Ovary (tissue), 10 donors: ENCODE measurements at regions of chr11 and their contacts with region 1.

Region 1: GRCh38 chr11:62394825-62395538 is 23.9 kb upstream of the SCGB1A1 start:
- DNase-seq: peak; percentile 83 to 91 (median 88)
- H3K4me3 ChIP-seq: peak overlapping the region; percentile 40
- H3K27ac ChIP-seq: peak overlapping the region in 1 of 2 donors; percentile 75
- H3K4me1 ChIP-seq: peaks cover 24% of the 10 kb centered on the region
- H3K27me3 ChIP-seq: no peaks in the 10 kb centered on the region
- CTCF ChIP-seq: peak; percentile 58 to 80 (median 65)
- EP300 ChIP-seq: no peak
- POLR2A ChIP-seq: no peak

Region 2: GRCh38 chr11:61477727-61478148 is 917.2 kb before region 1 on chr11:
- intact Hi-C with region 1: no loop called
- DNase-seq: peak; percentile 43 to 77 (median 63)
- H3K4me3 ChIP-seq: no peak overlapping the region
- H3K27ac ChIP-seq: no peak overlapping the region
- H3K4me1 ChIP-seq: no peaks in the 10 kb centered on the region
- H3K27me3 ChIP-seq: no peaks in the 10 kb centered on the region
- CTCF ChIP-seq: peak; percentile 66 to 88 (median 88)
- EP300 ChIP-seq: no peak
- POLR2A ChIP-seq: no peak

Region 3: GRCh38 chr11:62295504-62295903 is 99.5 kb before region 1 on chr11:
- intact Hi-C with region 1: no loop called
- DNase-seq: no peak
- H3K4me3 ChIP-seq: no peak overlapping the region
- H3K27ac ChIP-seq: no peak overlapping the region
- H3K4me1 ChIP-seq: no peaks in the 10 kb centered on the region
- H3K27me3 ChIP-seq: no peaks in the 10 kb centered on the region
- CTCF ChIP-seq: no peak
- EP300 ChIP-seq: no peak
- POLR2A ChIP-seq: no peak

Region 4: GRCh38 chr11:62542750-62543567 is 148.0 kb after region 1 on chr11:
- intact Hi-C with region 1: loop called in 2 of 4 experiments (anchors 2 to 5 kb)
- DNase-seq: peak; percentile 75 to 86 (median 84)
- H3K4me3 ChIP-seq: peak overlapping the region; percentile 99
- H3K27ac ChIP-seq: peak overlapping the region; percentile 68 to 94
- H3K4me1 ChIP-seq: peaks cover 47% of the 10 kb centered on the region
- H3K27me3 ChIP-seq: no peaks in the 10 kb centered on the region
- CTCF ChIP-seq: peak; percentile 96 to 98 (median 98)
- EP300 ChIP-seq: no peak
- POLR2A ChIP-seq: no peak

Region 5: GRCh38 chr11:62556108-62556871 is 161.3 kb after region 1 on chr11:
- intact Hi-C with region 1: loop called in 1 of 4 experiments (anchors 5 kb)
- DNase-seq: peak; percentile 81 to 88 (median 83)
- H3K4me3 ChIP-seq: no peak overlapping the region
- H3K27ac ChIP-seq: peak overlapping the region; percentile 2 to 68
- H3K4me1 ChIP-seq: peaks cover 35% of the 10 kb centered on the region
- H3K27me3 ChIP-seq: no peaks in the 10 kb centered on the region
- CTCF ChIP-seq: no peak
- EP300 ChIP-seq: no peak
- POLR2A ChIP-seq: no peak

Region 6: GRCh38 chr11:62671575-62672389 is 276.8 kb after region 1 on chr11 and contains the starts of genes LBHD1 and UQCC3:
- intact Hi-C with region 1: loop called in 1 of 4 experiments (anchors 10 kb)
- DNase-seq: peak; percentile 75 to 85 (median 78)
- H3K4me3 ChIP-seq: peak within 1 kb of the TSS; percentile 83
- H3K27ac ChIP-seq: peak within 1 kb of the TSS; percentile 44 to 82
- H3K4me1 ChIP-seq: peaks cover 9% of the 10 kb centered on the region
- H3K27me3 ChIP-seq: no peaks in the 10 kb centered on the region
- CTCF ChIP-seq: no peak
- EP300 ChIP-seq: no peak
- POLR2A ChIP-seq: peak; percentile 60
- total RNA-seq, gene LBHD1: 2.4 to 6.0 (median 4.6) TPM
- total RNA-seq, gene UQCC3: 7.1 to 13.7 (median 8.9) TPM

Region 7: GRCh38 chr11:62689421-62690183 is 294.6 kb after region 1 on chr11 and contains the start of gene LRRN4CL:
- intact Hi-C with region 1: loop called in 2 of 4 experiments (anchors 5 kb)
- DNase-seq: peak; percentile 86 to 97 (median 94)
- H3K4me3 ChIP-seq: peak within 1 kb of the TSS; percentile 48
- H3K27ac ChIP-seq: peak within 1 kb of the TSS; percentile 79 to 87
- H3K4me1 ChIP-seq: peaks cover 12% of the 10 kb centered on the region
- H3K27me3 ChIP-seq: no peaks in the 10 kb centered on the region
- CTCF ChIP-seq: peak in 1 of 3 donors; percentile 13
- EP300 ChIP-seq: peak; percentile 9
- POLR2A ChIP-seq: peak; percentile 75
- total RNA-seq, gene LRRN4CL: 19.5 to 38.6 (median 25.5) TPM

Region 8: GRCh38 chr11:62694455-62695167 is 299.6 kb after region 1 on chr11:
- intact Hi-C with region 1: loop called in 2 of 4 experiments (anchors 5 kb)
- DNase-seq: peak; percentile 76 to 87 (median 79)
- H3K4me3 ChIP-seq: no peak overlapping the region
- H3K27ac ChIP-seq: no peak overlapping the region
- H3K4me1 ChIP-seq: peaks cover 2% of the 10 kb centered on the region
- H3K27me3 ChIP-seq: no peaks in the 10 kb centered on the region
- CTCF ChIP-seq: peak; percentile 56 to 65 (median 59)
- EP300 ChIP-seq: no peak
- POLR2A ChIP-seq: no peak

Region 9: DNA sequence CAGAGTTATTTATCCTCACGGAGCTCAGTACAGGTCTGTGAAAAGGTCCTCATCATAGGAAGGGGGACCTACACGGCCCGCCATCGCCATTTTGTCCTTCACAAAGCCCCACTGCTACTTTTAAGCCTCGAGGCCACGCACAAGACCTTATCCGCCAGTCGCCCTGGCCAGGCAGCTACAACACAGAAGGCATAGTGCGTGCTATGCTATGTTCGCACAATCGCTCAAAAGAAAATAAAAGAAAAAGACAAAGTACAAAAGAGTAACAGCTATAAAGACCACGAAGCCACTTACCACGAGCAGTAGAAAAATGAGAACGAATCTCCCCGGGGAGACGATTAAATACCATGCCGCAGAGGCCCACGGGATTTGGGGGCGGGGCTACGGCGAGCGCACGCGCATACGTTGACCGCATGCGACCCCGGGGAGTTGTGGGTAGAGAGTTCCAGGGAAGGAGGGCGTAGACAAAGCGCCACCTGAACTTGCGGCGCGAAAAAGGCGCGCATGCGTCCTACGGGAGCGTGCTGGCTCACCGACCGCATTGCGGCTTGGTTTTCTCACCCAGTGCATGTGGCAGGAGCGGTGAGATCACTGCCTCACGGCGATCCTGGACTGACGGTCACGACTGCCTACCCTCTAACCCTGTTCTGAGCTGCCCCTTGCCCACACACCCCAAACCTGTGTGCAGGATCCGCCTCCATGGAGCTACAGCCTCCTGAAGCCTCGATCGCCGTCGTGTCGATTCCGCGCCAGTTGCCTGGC is 460.8 kb after region 1 on chr11:
- intact Hi-C with region 1: loop called in 1 of 4 experiments (anchors 10 kb)
- DNase-seq: peak; percentile 96 to 99 (median 97)
- H3K4me3 ChIP-seq: peak overlapping the region; percentile 94
- H3K27ac ChIP-seq: peak overlapping the region in 1 of 2 donors; percentile 46
- H3K4me1 ChIP-seq: peaks cover 6% of the 10 kb centered on the region
- H3K27me3 ChIP-seq: no peaks in the 10 kb centered on the region
- CTCF ChIP-seq: no peak
- EP300 ChIP-seq: no peak
- POLR2A ChIP-seq: peak; percentile 96

Region 10: GRCh38 chr11:63745304-63746170 is 1350.6 kb after region 1 on chr11:
- intact Hi-C with region 1: no loop called
- DNase-seq: no peak
- H3K4me3 ChIP-seq: no peak overlapping the region
- H3K27ac ChIP-seq: no peak overlapping the region
- H3K4me1 ChIP-seq: no peaks in the 10 kb centered on the region
- H3K27me3 ChIP-seq: no peaks in the 10 kb centered on the region
- CTCF ChIP-seq: no peak
- EP300 ChIP-seq: no peak
- POLR2A ChIP-seq: no peak